ENCODE measurements at regions of chr9 and their contacts with region 1.

Region 1: DNA sequence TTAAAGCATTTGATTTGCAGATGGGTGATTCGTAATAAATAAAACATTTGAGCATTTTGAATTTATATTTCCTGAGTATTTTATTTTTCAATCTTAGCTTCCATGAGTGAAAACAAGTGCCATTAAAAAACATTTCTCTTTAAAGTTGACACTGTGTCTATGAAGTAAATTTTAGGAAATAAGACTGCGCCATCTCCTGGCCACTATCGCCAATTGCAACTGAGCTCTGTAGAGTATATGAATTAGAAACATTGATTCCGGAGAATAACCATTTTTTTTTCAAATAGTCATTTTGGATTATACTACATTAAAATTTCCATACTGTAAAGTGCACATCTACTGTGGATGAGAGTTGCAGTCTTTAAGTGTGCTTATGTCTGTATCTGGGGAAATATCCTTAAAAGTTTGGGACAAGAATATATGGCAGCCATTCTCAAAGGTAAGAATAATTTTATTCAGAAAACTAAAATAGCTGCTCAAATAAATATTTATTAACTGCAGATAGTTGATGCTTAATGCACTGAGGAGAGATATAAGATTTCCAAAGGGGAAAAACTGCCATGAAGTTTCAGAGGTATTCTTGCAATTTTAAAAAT is 5.9 kb downstream of the DMRTA1 start:
- DNase-seq: peak; percentile 29
- ATAC-seq: peak; percentile 66
- H3K4me3 ChIP-seq: no peak overlapping the region
- H3K27ac ChIP-seq: no peak overlapping the region
- H3K4me1 ChIP-seq: no peaks in the 10 kb centered on the region
- H3K27me3 ChIP-seq: peaks cover 21% of the 10 kb centered on the region
- CTCF ChIP-seq: peak; percentile 70 to 89 (median 78)
- POLR2A ChIP-seq: no peak
- RAD21 ChIP-seq: peak; percentile 75

Region 2: DNA sequence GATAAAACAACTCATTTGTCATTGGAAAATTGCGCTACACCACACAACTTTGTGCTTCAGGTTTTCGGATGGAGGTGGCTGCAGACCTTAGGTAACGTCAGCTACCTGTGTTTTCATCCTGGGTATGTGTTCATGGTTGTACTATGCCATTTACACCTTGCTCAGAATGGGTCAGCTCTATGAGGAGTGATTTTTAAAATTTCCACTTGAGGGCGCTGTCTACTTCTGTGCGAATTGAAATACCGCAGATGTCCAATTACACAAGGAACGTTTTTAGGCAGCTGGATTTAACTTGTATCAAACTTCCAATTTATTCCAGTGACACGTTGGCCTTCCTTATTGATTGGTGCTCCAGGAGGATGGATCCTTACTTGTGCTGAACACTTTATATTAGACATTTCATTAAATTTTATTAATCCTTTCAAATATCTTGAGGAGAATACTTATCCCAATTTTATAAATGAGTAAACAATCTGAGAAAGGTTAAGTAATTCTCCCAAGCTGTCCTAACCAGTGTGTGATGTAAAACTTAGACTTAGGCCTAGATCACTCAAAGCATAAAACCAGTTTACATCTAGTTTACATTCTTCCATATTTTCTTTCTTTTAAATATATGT is 17.5 kb after region 1 on chr9:
- CTCF ChIA-PET with region 1: interaction called, 14 read pairs
- POLR2A ChIA-PET with region 1: no interaction called
- RAD21 ChIA-PET with region 1: no interaction called
- intact Hi-C with region 1: no loop called
- DNase-seq: peak; percentile 26
- ATAC-seq: peak; percentile 95
- H3K4me3 ChIP-seq: no peak overlapping the region
- H3K27ac ChIP-seq: no peak overlapping the region
- H3K4me1 ChIP-seq: no peaks in the 10 kb centered on the region
- H3K27me3 ChIP-seq: peaks cover 27% of the 10 kb centered on the region
- CTCF ChIP-seq: peak; percentile 18 to 93 (median 65); a peak in 5 of 6 replicates
- POLR2A ChIP-seq: no peak
- RAD21 ChIP-seq: peak; percentile 72

Region 3: DNA sequence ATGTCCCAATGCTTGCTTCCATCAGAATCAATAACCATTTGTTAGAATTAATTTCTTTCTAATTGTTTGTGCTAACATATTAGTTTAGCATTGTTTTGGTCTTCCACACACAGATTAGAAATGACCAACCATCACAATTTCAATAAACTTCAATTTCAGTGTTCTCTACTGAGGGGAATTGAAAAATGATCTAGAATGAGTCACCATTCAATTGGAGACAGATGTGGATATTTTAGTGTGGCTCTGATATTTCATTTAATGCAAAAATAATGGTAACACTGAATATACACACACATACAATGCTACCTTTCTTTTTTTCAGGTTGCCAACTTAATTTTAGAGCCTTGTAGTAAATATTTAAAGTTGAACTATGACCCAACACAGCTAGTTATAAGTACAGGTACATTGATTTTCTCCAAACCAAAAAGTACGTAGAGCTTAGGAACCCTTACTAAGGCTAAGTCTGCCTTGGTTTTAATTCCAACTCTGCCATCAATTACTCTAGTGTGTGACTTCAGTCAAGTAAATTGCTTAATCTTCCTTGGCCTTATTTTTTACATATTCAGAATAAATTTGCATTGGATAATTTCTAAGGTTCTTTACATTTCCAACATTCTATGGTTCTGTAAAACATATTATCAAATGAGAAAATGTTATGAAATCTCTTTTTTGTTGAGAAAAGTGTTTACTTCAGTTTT is 138.0 kb after region 1 on chr9:
- CTCF ChIA-PET with region 1: no interaction called
- POLR2A ChIA-PET with region 1: no interaction called
- RAD21 ChIA-PET with region 1: no interaction called
- intact Hi-C with region 1: no loop called
- DNase-seq: no peak
- ATAC-seq: no peak
- H3K4me3 ChIP-seq: no peak overlapping the region
- H3K27ac ChIP-seq: no peak overlapping the region
- H3K4me1 ChIP-seq: no peaks in the 10 kb centered on the region
- H3K27me3 ChIP-seq: no peaks in the 10 kb centered on the region
- CTCF ChIP-seq: no peak
- POLR2A ChIP-seq: no peak
- RAD21 ChIP-seq: no peak

Measured in HCT116 (cell line).